ENCODE measurements at regions of chr2 and their contacts with region 1.

Region 1: DNA sequence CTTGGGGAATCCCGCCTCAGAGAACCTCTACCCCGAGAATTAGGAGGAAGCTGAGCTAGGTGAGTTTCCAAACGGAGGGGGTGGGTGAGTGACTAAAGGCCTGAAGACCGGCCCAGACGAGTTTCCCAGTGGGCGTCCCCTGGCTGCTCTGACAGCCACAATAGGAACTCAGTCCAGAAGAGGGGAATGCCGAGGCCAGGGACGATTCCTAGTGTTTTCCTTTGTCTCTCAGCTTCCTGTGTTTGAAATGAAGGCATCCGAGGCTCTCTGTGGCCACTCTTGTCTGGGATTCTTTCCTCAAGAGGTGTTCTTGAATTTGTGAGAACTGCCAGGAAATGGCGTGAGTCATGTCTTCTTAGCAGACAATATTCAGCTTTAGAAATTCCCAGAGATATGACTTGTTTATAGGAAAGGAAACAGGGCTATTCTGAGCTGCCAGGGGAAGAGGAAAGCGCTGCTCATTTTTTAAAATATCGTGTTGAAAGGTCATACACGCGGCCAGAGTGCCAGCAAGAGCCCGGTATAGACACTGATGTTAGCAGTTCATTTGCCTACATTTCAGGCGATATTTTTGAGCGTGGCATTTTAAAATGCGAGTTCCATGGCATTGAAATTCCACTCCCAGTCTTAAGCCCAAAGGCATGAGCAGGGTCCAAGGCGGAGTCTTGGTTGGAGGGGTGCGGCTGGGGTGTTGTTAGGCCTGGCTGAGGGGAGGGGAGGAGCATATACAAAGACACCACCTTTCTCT is 169.1 kb upstream of the KLF7 start:
- DNase-seq: peak; percentile 100
- ATAC-seq: peak; percentile 79
- H3K4me3 ChIP-seq: peak overlapping the region; percentile 24
- H3K27ac ChIP-seq: peak overlapping the region; percentile 67
- H3K4me1 ChIP-seq: peaks cover 14% of the 10 kb centered on the region
- H3K27me3 ChIP-seq: no peaks in the 10 kb centered on the region
- CTCF ChIP-seq: no peak
- POLR2A ChIP-seq: peak; percentile 86
- RAD21 ChIP-seq: no peak; the same call in none of the 2 replicates

Region 2: DNA sequence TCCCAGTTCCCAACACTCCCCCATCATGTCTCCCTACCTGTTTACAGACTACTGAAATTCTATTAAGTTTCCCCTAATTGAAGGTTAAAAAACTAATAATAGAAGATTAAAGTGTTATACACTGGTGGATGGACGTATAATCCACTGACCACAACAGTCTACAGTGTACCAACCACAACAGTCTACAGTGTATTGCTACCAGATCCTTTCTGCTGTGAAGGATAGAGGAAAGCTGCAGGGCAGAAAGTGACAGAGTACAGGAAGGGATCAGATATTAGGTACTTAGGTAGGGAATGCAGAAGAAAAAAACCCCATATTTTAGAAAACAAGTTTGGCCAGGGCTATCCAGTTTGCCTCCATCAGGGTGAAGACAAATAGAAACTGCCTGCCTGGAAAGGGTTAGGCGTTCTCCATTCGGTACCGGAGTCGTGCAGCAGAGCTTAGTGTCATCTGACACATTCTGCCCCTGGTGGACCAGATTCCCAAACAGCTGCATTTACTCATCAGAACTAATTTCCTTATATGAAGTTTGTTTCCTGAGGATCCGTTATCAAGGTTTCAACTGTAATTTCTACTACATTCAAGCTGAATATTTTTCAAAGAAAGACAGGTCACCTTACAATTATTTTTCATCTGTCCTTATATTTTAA is 219.0 kb before region 1 on chr2:
- CTCF ChIA-PET with region 1: no interaction called
- POLR2A ChIA-PET with region 1: no interaction called
- dilution Hi-C with region 1: no loop called
- in situ Hi-C with region 1: no loop called
- intact Hi-C with region 1: no loop called
- DNase-seq: peak; percentile 63
- ATAC-seq: peak; percentile 81
- H3K4me3 ChIP-seq: no peak overlapping the region
- H3K27ac ChIP-seq: no peak overlapping the region
- H3K4me1 ChIP-seq: peaks cover 4% of the 10 kb centered on the region
- H3K27me3 ChIP-seq: no peaks in the 10 kb centered on the region
- CTCF ChIP-seq: peak; percentile 31; the same call in 1 of the 2 replicates
- POLR2A ChIP-seq: no peak; the same call in 1 of the 2 replicates
- RAD21 ChIP-seq: no peak

Region 3: DNA sequence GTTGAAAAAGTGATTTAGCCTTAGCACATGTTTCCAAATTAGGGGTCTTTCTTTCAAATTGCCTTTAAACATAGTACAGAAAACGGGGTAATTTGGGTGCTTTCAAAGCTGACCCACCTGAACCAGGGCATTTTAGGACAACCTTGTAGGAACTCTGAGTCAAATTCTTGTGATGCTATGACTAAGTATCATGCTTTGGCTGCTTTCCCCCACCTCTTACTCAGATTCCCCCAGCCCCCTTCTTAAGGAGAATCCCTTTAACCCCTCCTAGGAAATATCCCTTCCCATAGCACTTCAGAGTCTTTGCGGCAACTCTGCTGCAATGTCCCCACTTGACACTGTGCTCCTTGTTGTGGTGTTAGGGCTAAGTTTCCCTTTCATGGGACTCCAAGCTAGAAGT is 150.4 kb before region 1 on chr2:
- CTCF ChIA-PET with region 1: no interaction called
- POLR2A ChIA-PET with region 1: no interaction called
- dilution Hi-C with region 1: no loop called
- in situ Hi-C with region 1: no loop called
- intact Hi-C with region 1: loop called (anchors 5 kb)
- DNase-seq: peak; percentile 77
- ATAC-seq: no peak
- H3K4me3 ChIP-seq: no peak overlapping the region
- H3K27ac ChIP-seq: 0 out of 2 replicates have a peak overlapping the region, but pooled peaks have one; percentile 14
- H3K4me1 ChIP-seq: peaks cover 17% of the 10 kb centered on the region
- H3K27me3 ChIP-seq: no peaks in the 10 kb centered on the region
- CTCF ChIP-seq: no peak
- POLR2A ChIP-seq: no peak
- RAD21 ChIP-seq: no peak

Region 4: GRCh38 chr2:207394812-207395534 is 60.2 kb after region 1 on chr2:
- CTCF ChIA-PET with region 1: no interaction called
- POLR2A ChIA-PET with region 1: no interaction called
- dilution Hi-C with region 1: no loop called
- in situ Hi-C with region 1: no loop called
- intact Hi-C with region 1: loop called (anchors 2 kb)
- DNase-seq: peak; percentile 99
- ATAC-seq: peak; percentile 90
- H3K4me3 ChIP-seq: no peak overlapping the region
- H3K27ac ChIP-seq: peak overlapping the region; percentile 98
- H3K4me1 ChIP-seq: peaks cover 10% of the 10 kb centered on the region
- H3K27me3 ChIP-seq: no peaks in the 10 kb centered on the region
- CTCF ChIP-seq: no peak
- POLR2A ChIP-seq: no peak
- RAD21 ChIP-seq: peak; percentile 3

Region 5: DNA sequence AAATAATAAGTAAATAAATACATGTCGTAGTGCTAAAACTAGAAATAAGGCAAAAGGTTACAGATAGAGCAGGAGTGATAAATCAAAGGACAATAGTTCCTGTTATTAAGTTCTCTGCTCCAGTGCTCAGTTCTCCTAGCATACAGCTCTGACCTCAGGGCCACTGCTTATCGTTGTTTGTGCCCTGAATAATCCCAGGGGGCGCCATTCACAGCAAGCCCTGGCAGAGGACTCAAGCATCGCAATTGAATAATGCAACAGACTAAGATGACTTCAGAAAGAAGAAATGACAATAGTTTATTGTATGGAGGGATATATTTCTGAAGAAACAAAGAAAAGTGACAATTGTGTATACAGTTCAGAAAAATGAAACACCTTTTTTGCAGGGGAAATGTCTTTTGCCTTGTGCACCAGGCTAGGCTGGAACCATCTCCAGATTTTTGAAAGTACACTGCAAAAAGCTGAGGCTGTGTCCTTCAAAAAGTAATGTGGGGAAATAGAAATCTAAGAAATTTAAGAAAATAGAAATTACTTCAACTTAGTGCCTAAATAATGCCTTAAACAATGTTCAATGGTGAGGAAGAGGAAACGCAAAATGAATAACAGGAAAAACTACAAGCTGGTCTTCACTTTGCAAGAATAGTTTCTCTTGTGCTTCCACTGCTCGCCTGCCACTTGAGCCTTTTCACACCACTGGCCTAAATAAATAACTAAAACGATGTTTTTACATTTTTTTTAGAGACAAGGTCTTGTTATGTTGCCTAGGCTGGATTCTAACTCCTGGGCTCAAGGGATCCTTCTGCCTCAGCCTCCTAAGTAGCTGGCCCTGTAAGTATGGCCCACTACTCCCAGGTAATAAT is 357.6 kb after region 1 on chr2:
- CTCF ChIA-PET with region 1: no interaction called
- POLR2A ChIA-PET with region 1: no interaction called
- dilution Hi-C with region 1: no loop called
- in situ Hi-C with region 1: no loop called
- intact Hi-C with region 1: no loop called
- DNase-seq: peak; percentile 4
- ATAC-seq: no peak
- H3K4me3 ChIP-seq: no peak overlapping the region
- H3K27ac ChIP-seq: no peak overlapping the region
- H3K4me1 ChIP-seq: peaks cover 2% of the 10 kb centered on the region; the same call in 1 of the 2 replicates
- H3K27me3 ChIP-seq: no peaks in the 10 kb centered on the region
- CTCF ChIP-seq: peak; percentile 35
- POLR2A ChIP-seq: no peak
- RAD21 ChIP-seq: no peak

Measured in IMR-90 (cell line).